AG04450 (cell line): ENCODE measurements at regions of chr1 and their contacts with region 1.

Region 1: DNA sequence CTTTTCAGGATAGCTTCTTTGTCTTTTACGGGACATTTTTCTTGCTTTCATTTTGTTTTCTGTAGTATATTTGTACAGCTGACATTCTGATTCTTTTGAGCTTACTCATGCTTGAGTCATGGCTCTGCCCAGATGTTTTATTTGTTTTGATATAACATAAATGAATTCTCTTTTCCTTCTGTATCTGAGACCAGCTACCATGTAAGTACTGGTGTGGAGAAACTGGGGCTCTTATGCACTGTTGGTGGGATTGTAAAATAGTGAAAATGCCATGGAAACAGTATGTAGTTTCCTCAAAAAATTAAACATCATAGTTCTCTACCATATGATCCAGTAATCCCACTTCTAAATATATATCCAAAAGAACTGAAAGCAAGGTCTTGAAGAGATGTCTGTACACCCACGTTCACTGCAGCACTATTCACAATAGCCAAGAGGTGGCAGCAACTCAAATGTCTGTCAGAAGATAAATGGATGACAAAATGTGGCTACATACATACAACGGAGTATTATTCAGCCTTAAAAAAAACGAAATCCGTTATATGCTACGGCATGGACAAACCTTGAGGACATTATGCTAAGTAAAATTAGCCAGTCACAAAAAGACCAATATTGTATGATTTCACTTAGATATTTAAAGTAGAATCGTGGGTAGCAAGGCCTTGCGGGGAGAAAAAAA is 61.4 kb downstream of the EIF2B3 start:
- DNase-seq: peak; percentile 83
- H3K4me3 ChIP-seq: peak overlapping the region; percentile 3; the same call in 1 of the 2 replicates
- H3K27ac ChIP-seq: peak overlapping the region; percentile 75
- H3K27me3 ChIP-seq: no peaks in the 10 kb centered on the region
- CTCF ChIP-seq: peak; percentile 72

Region 2: GRCh38 chr1:44812822-44813543 is 112.0 kb before region 1 on chr1:
- CTCF ChIA-PET with region 1: no interaction called
- POLR2A ChIA-PET with region 1: interaction called, 11 read pairs
- DNase-seq: no peak
- H3K4me3 ChIP-seq: no peak overlapping the region
- H3K27ac ChIP-seq: no peak overlapping the region
- H3K27me3 ChIP-seq: no peaks in the 10 kb centered on the region
- CTCF ChIP-seq: no peak

Region 3: DNA sequence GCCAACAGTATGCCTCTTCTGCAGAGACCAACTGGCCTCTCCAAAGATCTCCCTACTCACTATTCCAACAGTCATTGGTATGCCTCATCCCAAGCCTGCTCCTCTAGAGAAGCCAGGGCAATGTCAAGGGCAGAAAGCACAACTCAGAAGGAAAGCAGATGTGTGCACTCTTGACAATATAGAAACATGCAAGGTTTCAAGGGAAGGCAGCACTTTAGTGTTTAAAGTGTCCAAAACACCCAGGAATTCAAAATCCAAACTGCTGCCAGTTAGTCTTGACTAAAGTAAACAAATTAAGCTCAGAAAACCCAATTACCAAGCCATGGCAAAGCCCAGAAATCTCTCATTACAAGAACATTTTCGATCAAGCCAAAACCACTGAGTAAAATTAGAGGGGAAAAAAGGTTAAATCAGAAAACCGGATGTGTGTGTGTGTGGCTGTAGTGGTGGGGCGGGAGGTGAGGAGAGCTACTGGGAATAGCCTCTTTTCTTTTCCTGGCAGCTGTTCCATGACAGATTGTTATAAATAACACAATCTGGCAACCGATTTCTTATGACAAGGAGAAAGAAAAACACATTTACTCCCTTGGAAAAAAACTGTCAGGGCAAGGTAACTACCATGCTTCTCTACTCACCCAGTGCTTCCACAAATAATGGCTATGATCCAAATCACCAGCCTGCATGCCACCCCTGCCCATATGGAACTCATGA is 22.2 kb after region 1 on chr1:
- CTCF ChIA-PET with region 1: interaction called, 5 read pairs
- POLR2A ChIA-PET with region 1: interaction called, 12 read pairs
- DNase-seq: peak; percentile 57
- H3K4me3 ChIP-seq: no peak overlapping the region
- H3K27ac ChIP-seq: peak overlapping the region; percentile 33
- H3K27me3 ChIP-seq: no peaks in the 10 kb centered on the region
- CTCF ChIP-seq: no peak